A673 (cell line): ENCODE measurements at regions of chr17 and their contacts with region 1.

Region 1: GRCh38 chr17:7703584-7704479 is 1.2 kb upstream of the EFNB3 start:
- DNase-seq: peak; percentile 85
- H3K4me3 ChIP-seq: peak overlapping the region; percentile 78
- H3K27ac ChIP-seq: no peak overlapping the region
- H3K4me1 ChIP-seq: peaks cover 32% of the 10 kb centered on the region
- H3K27me3 ChIP-seq: no peaks in the 10 kb centered on the region
- CTCF ChIP-seq: no peak

Region 2: DNA sequence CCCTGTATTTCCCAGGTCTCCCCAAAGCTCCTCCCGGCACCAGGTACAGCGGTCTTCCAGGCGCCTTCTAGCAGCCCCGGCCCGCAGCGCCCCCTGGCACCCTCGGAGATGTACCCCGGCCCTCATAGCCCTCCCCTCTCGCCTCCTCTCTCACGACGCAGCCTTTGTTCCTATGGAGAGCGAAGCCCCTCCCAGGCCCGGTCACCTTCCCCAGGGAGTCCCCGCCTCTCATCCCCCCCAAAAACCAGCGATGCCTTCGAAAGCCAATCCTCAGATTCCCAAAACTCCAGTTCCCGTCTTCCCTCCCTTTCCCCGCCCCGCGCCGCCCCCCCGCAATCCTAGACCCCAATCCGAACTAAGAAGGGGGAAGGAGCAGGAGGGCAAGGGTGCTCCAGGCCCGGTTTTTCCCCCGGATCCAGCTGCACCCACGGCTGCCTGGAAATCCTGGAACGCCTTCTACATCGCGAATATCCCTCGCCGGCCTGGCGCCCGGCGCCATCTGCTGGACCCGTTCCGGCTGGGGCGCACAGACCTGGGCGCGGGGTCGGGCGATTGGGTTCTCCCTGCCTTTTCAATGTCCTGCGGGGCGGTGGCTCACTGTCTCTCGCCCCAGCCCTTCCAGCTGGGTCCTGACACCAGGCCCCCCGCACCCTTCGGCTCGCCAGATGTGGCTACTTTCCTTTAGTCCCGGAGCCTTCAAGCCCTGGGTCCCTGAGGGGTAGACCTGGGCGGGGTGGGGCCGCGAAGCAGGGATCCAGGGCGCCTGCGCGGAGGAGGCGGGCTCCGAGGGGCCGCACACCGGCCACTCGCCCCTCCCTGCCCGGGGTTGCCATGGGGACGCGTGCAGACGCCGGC is 13.3 kb after region 1 on chr17 and contains the start of gene DNAH2:
- CTCF ChIA-PET with region 1: interaction called, 4 read pairs
- POLR2A ChIA-PET with region 1: interaction called, 3 read pairs
- intact Hi-C with region 1: loop called (anchors 1 kb)
- DNase-seq: peak; percentile 97
- H3K4me3 ChIP-seq: peak within 1 kb of the TSS; percentile 61
- H3K27ac ChIP-seq: no peak within 1 kb of the TSS
- H3K4me1 ChIP-seq: peaks cover 18% of the 10 kb centered on the region
- H3K27me3 ChIP-seq: no peaks in the 10 kb centered on the region
- CTCF ChIP-seq: peak; percentile 57
- total RNA-seq, gene DNAH2: 0.15 and 0.24 TPM in 2 replicates